ENCODE measurements at regions of chr7 and their contacts with region 1.

Region 1: GRCh38 chr7:44587843-44588711 is 6.0 kb upstream of the TMED4 start:
- DNase-seq: peak; percentile 77
- ATAC-seq: peak; percentile 88
- H3K4me3 ChIP-seq: no peak overlapping the region
- H3K27ac ChIP-seq: peak overlapping the region; percentile 65
- H3K4me1 ChIP-seq: peaks cover 9% of the 10 kb centered on the region; the same call in 1 of the 2 replicates
- H3K27me3 ChIP-seq: no peaks in the 10 kb centered on the region
- CTCF ChIP-seq: peak; percentile 87

Region 2: GRCh38 chr7:43954524-43955228 is 633.4 kb before region 1 on chr7:
- CTCF ChIA-PET with region 1: no interaction called
- POLR2A ChIA-PET with region 1: no interaction called
- intact Hi-C with region 1: no loop called
- DNase-seq: peak; percentile 69
- ATAC-seq: peak; percentile 100
- H3K4me3 ChIP-seq: no peak overlapping the region
- H3K27ac ChIP-seq: no peak overlapping the region
- H3K4me1 ChIP-seq: no peaks in the 10 kb centered on the region
- H3K27me3 ChIP-seq: no peaks in the 10 kb centered on the region
- CTCF ChIP-seq: peak; percentile 83

Region 3: GRCh38 chr7:44748045-44748947 is 160.2 kb after region 1 on chr7 and contains the start of gene ZMIZ2:
- CTCF ChIA-PET with region 1: interaction called, 3 read pairs
- POLR2A ChIA-PET with region 1: no interaction called
- intact Hi-C with region 1: loop called (anchors 5 kb)
- DNase-seq: peak; percentile 84
- ATAC-seq: peak; percentile 85
- H3K4me3 ChIP-seq: peak within 1 kb of the TSS; percentile 85
- H3K27ac ChIP-seq: peak within 1 kb of the TSS; percentile 77
- H3K4me1 ChIP-seq: peaks cover 24% of the 10 kb centered on the region
- H3K27me3 ChIP-seq: no peaks in the 10 kb centered on the region
- CTCF ChIP-seq: no peak
- total RNA-seq, gene ZMIZ2: 18.3 and 26.6 TPM in 2 replicates

Region 4: GRCh38 chr7:44797329-44798251 is 209.5 kb after region 1 on chr7:
- CTCF ChIA-PET with region 1: interaction called, 3 read pairs
- POLR2A ChIA-PET with region 1: no interaction called
- intact Hi-C with region 1: loop called (anchors 2 kb)
- DNase-seq: peak; percentile 83
- ATAC-seq: peak; percentile 52
- H3K4me3 ChIP-seq: peak overlapping the region; percentile 92
- H3K27ac ChIP-seq: peak overlapping the region; percentile 95
- H3K4me1 ChIP-seq: peaks cover 16% of the 10 kb centered on the region
- H3K27me3 ChIP-seq: no peaks in the 10 kb centered on the region
- CTCF ChIP-seq: peak; percentile 55

Region 5: GRCh38 chr7:44921607-44922359 is 333.7 kb after region 1 on chr7:
- CTCF ChIA-PET with region 1: no interaction called
- POLR2A ChIA-PET with region 1: no interaction called
- intact Hi-C with region 1: loop called (anchors 2 kb)
- DNase-seq: peak; percentile 78
- ATAC-seq: peak; percentile 97
- H3K4me3 ChIP-seq: no peak overlapping the region
- H3K27ac ChIP-seq: no peak overlapping the region
- H3K4me1 ChIP-seq: no peaks in the 10 kb centered on the region
- H3K27me3 ChIP-seq: no peaks in the 10 kb centered on the region
- CTCF ChIP-seq: peak; percentile 86